Calu3 (cell line): ENCODE measurements at regions of chr2 and their contacts with region 1.

Region 1: DNA sequence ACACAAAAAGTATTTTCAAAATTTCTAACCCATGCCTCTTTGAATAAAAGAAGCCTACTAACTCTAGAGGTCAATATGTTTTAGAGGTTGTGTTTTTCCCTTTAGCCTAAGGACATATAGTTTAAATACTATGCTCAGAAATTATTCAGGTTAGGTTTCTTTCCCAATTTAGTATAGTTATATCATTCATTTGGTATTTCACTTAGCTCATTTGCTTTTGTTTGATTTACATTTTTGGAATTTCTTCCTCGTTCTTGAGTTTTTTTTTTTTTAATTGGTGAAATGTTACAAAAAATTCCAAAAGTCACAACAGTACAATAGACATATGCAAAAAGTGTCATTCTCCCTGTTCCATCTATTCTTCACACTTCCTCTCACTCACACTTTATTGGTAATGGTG is 371.3 kb upstream of the TNP1 start:
- DNase-seq: no peak
- H3K4me3 Mint-ChIP-seq: no peak overlapping the region
- H3K27ac Mint-ChIP-seq: peak overlapping the region; percentile 90
- H3K4me1 Mint-ChIP-seq: peaks cover 56% of the 10 kb centered on the region
- H3K27me3 Mint-ChIP-seq: no peaks in the 10 kb centered on the region
- CTCF ChIP-seq: no peak

Region 2: DNA sequence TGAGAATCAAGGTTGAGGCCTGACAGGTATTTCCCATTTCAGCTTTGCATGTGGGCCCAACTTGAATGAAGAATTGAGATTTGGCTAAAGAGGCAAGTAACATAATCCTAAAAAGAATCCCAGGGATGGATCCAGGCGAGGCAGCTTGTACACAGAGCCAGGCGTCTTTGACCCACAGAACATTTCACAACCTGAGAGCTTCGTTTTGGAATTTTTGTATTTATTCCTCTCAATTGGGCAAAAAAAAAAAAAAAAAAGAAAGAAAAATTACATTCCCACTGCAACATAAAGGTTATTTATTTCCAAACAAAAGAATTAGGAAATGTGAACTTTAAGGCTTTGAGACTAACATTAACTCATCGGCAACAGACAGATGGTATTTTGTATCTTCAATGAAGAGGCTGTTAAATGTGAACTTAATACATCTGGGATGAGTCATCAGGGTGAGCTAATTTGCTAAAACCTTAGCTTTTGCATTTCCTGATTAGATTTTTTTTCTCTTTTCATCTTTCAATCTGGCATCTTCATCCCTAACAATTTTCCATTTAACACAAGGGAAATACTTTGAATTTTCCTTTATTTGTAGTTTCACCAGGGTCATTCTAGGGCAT is 107.2 kb after region 1 on chr2:
- CTCF ChIA-PET with region 1: no interaction called
- intact Hi-C with region 1: loop called (anchors 1 kb)
- DNase-seq: no peak
- H3K4me3 Mint-ChIP-seq: no peak overlapping the region
- H3K27ac Mint-ChIP-seq: peak overlapping the region; percentile 60
- H3K4me1 Mint-ChIP-seq: peaks cover 64% of the 10 kb centered on the region
- H3K27me3 Mint-ChIP-seq: no peaks in the 10 kb centered on the region
- CTCF ChIP-seq: no peak

Region 3: DNA sequence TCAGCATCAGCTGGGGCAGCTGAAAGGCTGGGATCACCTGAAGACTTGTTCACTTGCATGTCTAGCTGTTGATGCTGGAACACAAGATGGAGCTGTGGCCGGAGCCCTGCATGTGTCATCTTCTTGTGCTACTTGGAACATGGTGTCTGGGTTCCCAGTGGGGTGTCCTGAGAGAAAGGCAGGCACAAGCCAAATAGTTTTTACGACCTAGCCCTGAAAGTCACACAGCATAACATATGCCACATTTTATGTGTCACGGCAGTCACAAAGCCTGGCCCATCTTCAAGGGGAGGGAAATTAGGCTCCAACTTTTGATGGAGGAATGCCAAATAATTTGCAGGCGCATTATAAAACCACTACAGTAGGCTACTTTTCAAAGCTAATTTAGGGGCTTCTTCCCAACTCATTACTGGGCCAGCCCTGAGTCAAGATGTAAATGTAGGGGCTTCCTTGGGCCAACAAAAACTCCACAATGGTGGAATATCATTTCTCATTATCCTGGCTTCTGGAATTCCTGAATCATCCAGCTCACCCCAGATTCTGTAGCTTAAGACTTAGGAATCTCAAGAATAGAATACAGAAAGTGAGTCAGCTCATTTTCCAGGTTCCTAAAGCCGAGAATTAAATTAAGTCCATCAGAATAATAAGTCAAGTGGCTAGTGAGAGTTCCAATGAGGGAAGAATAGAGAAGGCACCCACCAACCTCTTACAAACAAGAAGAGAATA is 228.6 kb after region 1 on chr2:
- CTCF ChIA-PET with region 1: no interaction called
- intact Hi-C with region 1: no loop called
- DNase-seq: no peak
- H3K4me3 Mint-ChIP-seq: no peak overlapping the region
- H3K27ac Mint-ChIP-seq: no peak overlapping the region
- H3K4me1 Mint-ChIP-seq: peaks cover 13% of the 10 kb centered on the region
- H3K27me3 Mint-ChIP-seq: no peaks in the 10 kb centered on the region
- CTCF ChIP-seq: no peak

Region 4: GRCh38 chr2:217501887-217502286 is 270.7 kb after region 1 on chr2:
- CTCF ChIA-PET with region 1: no interaction called
- intact Hi-C with region 1: loop called (anchors 10 kb)
- DNase-seq: no peak
- H3K4me3 Mint-ChIP-seq: no peak overlapping the region
- H3K27ac Mint-ChIP-seq: no peak overlapping the region
- H3K4me1 Mint-ChIP-seq: peaks cover 15% of the 10 kb centered on the region
- H3K27me3 Mint-ChIP-seq: no peaks in the 10 kb centered on the region
- CTCF ChIP-seq: no peak